ENCODE measurements at regions of chr14 and their contacts with region 1.

Region 1: GRCh38 chr14:94341656-94342333 is 18.7 kb upstream of the SERPINA6 start:
- DNase-seq: no peak
- H3K4me3 ChIP-seq: no peak overlapping the region
- H3K4me3 Mint-ChIP-seq: no peak overlapping the region
- H3K27ac Mint-ChIP-seq: no peak overlapping the region
- H3K4me1 ChIP-seq: peaks cover 27% of the 10 kb centered on the region
- H3K4me1 Mint-ChIP-seq: peaks cover 21% of the 10 kb centered on the region
- H3K27me3 ChIP-seq: no peaks in the 10 kb centered on the region
- H3K27me3 Mint-ChIP-seq: no peaks in the 10 kb centered on the region
- CTCF ChIP-seq: no peak

Region 2: DNA sequence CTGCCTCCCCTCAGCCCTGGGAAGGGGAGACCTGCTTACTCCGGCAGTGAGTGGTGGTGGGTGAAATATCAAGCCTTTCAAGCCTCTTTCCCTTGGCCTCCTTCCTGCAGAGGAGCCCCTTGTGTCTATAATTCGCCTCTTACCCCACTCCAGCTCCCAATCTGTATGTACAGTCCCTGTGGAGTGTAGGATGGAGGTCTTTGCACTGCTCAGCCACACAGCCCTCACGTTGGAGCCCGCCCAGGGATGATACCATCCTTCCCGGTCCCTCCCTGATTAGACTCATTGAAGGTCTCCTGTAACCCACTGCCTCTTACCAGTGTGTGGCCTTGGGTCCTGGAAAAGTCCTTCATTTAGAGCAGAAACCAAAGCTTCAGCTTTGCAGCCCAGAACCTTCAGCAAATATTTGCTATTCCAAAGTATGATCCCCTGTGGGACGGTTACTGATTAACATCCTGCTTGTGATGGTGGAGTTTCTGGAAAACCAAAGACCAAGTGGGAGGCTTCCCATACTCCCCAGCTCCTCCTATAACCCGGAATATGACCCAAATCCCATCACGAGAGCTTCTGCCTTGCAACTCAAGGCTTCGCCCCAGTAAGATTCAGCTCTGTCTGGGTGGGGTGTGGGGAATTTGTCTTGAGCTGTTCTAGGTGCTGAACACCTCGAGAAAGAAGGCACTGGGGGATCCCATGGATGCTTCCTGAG is 48.8 kb before region 1 on chr14 and contains the start of gene SERPINA10:
- CTCF ChIA-PET with region 1: no interaction called
- POLR2A ChIA-PET with region 1: no interaction called
- intact Hi-C with region 1: loop called (anchors 2 kb)
- DNase-seq: peak; percentile 75 to 80
- H3K4me3 ChIP-seq: peak within 1 kb of the TSS; percentile 26
- H3K4me3 Mint-ChIP-seq: peak within 1 kb of the TSS; percentile 65
- H3K27ac Mint-ChIP-seq: peak within 1 kb of the TSS; percentile 81
- H3K4me1 ChIP-seq: peaks cover 46% of the 10 kb centered on the region
- H3K4me1 Mint-ChIP-seq: peaks cover 9% of the 10 kb centered on the region
- H3K27me3 ChIP-seq: no peaks in the 10 kb centered on the region
- H3K27me3 Mint-ChIP-seq: no peaks in the 10 kb centered on the region
- CTCF ChIP-seq: no peak
- total RNA-seq, gene SERPINA10: 5.6 and 7.3 TPM in 2 replicates

Region 3: DNA sequence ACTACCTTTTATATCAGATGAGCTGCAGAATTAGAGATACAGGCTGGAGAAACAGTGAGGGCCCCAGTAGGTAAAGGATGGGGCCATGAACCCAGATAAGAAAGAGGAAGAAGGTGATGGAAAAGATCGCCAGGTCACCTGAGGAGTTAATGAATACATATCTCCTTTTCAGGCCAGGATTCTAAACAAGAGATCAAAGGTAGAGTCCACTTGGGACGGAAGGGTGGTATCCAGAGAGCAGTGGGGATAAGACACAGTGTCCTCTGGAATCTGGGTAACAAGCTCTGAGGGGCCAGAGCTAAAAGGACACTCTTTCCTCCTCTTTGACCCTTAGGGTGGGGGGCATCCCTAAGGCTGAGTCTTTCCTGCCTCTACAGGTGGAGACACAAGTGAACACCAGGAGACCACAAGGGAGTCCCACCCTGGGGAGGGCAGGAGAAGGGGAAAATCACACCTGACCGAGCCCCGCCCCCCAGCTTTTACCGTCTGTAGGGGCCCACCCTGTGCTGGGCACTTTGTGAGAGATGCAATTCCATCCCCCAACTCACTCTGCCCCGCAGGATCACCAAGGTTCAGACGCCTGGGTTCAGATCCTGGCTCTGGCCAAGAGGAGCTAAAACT is 19.3 kb after region 1 on chr14:
- CTCF ChIA-PET with region 1: no interaction called
- POLR2A ChIA-PET with region 1: no interaction called
- intact Hi-C with region 1: loop called (anchors 1 kb)
- DNase-seq: peak; percentile 59 to 67
- H3K4me3 ChIP-seq: no peak overlapping the region
- H3K4me3 Mint-ChIP-seq: peak overlapping the region; percentile 34
- H3K27ac Mint-ChIP-seq: peak overlapping the region; percentile 72
- H3K4me1 ChIP-seq: peaks cover 36% of the 10 kb centered on the region
- H3K4me1 Mint-ChIP-seq: peaks cover 38% of the 10 kb centered on the region
- H3K27me3 ChIP-seq: no peaks in the 10 kb centered on the region
- H3K27me3 Mint-ChIP-seq: no peaks in the 10 kb centered on the region
- CTCF ChIP-seq: no peak

Region 4: GRCh38 chr14:94423453-94424056 is 81.8 kb after region 1 on chr14:
- CTCF ChIA-PET with region 1: no interaction called
- POLR2A ChIA-PET with region 1: no interaction called
- intact Hi-C with region 1: no loop called
- DNase-seq: peak; percentile 80 to 86
- H3K4me3 ChIP-seq: no peak overlapping the region
- H3K4me3 Mint-ChIP-seq: peak overlapping the region; percentile 13
- H3K27ac Mint-ChIP-seq: no peak overlapping the region
- H3K4me1 ChIP-seq: no peaks in the 10 kb centered on the region
- H3K4me1 Mint-ChIP-seq: peaks cover 7% of the 10 kb centered on the region
- H3K27me3 ChIP-seq: no peaks in the 10 kb centered on the region
- H3K27me3 Mint-ChIP-seq: no peaks in the 10 kb centered on the region
- CTCF ChIP-seq: peak; percentile 65 to 79

Region 5: GRCh38 chr14:94481468-94482131 is 139.8 kb after region 1 on chr14:
- CTCF ChIA-PET with region 1: no interaction called
- POLR2A ChIA-PET with region 1: no interaction called
- intact Hi-C with region 1: no loop called
- DNase-seq: no peak
- H3K4me3 ChIP-seq: no peak overlapping the region
- H3K4me3 Mint-ChIP-seq: no peak overlapping the region
- H3K27ac Mint-ChIP-seq: no peak overlapping the region
- H3K4me1 ChIP-seq: no peaks in the 10 kb centered on the region
- H3K4me1 Mint-ChIP-seq: no peaks in the 10 kb centered on the region
- H3K27me3 ChIP-seq: no peaks in the 10 kb centered on the region
- H3K27me3 Mint-ChIP-seq: no peaks in the 10 kb centered on the region
- CTCF ChIP-seq: no peak

Measured in Caco-2 (cell line).